ENCODE measurements at regions of chr14 and their contacts with region 1.

Region 1: DNA sequence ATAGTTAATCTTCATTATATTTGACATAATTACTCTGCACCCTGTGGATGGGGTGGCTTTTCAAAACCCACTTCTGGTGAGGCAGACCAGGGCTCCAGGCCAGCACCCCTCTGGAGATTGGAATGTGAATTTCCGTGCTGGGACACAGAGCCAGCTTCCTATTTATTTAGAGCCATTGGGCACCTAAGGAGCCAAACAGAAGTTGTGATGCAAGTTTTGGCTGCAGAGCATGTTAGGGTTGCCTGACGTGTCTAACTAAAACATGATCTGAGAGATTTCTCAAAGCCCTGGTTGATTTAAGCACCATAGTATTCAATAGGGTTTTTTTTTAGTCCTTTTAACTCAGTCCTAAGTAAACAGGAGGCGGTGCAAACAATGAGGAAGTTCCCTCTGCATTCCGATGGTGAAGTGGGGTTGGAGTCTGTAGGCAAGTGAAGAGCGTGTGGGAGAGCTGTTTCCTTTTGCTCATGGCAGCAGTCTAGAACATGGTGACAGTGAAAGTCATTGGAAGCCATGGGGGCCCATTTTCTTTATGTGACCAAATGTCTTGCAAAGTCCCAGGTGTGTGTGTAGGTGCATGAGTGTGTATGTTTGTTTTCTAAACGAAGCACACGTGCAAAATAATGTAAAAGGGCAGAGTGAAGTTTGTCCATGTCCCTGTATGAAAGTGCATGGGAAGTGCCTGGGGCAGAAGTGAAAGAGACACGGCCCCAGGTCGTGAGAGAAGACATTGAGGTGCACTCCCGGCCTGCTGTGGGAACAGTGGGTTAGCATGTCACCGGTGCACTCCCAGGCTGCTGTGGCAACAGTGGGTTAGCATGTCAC is 117.7 kb downstream of the PRKCH start:
- DNase-seq: peak; percentile 75
- H3K4me3 ChIP-seq: peak overlapping the region; percentile 10
- H3K4me3 Mint-ChIP-seq: peak overlapping the region; percentile 69
- H3K27ac Mint-ChIP-seq: peak overlapping the region; percentile 98
- H3K4me1 ChIP-seq: peaks cover 35% of the 10 kb centered on the region
- H3K4me1 Mint-ChIP-seq: peaks cover 22% of the 10 kb centered on the region
- H3K27me3 ChIP-seq: no peaks in the 10 kb centered on the region
- H3K27me3 Mint-ChIP-seq: no peaks in the 10 kb centered on the region
- CTCF ChIP-seq: no peak

Region 2: GRCh38 chr14:61321385-61322010 is 117.6 kb before region 1 on chr14 and contains the start of gene PRKCH:
- CTCF ChIA-PET with region 1: no interaction called
- POLR2A ChIA-PET with region 1: interaction called, 3 read pairs
- intact Hi-C with region 1: loop called (anchors 1 kb)
- DNase-seq: peak; percentile 92
- H3K4me3 ChIP-seq: peak within 1 kb of the TSS; percentile 49
- H3K4me3 Mint-ChIP-seq: peak within 1 kb of the TSS; percentile 83
- H3K27ac Mint-ChIP-seq: peak within 1 kb of the TSS; percentile 71
- H3K4me1 ChIP-seq: 0 out of 2 replicates have a peak, but pooled peaks cover 3% of the 10 kb centered on the region
- H3K4me1 Mint-ChIP-seq: no peaks in the 10 kb centered on the region
- H3K27me3 ChIP-seq: no peaks in the 10 kb centered on the region
- H3K27me3 Mint-ChIP-seq: no peaks in the 10 kb centered on the region
- CTCF ChIP-seq: peak in 1 of 2 experiments; percentile 19
- total RNA-seq, gene PRKCH: 17.8 and 18.3 TPM in 2 replicates

Region 3: DNA sequence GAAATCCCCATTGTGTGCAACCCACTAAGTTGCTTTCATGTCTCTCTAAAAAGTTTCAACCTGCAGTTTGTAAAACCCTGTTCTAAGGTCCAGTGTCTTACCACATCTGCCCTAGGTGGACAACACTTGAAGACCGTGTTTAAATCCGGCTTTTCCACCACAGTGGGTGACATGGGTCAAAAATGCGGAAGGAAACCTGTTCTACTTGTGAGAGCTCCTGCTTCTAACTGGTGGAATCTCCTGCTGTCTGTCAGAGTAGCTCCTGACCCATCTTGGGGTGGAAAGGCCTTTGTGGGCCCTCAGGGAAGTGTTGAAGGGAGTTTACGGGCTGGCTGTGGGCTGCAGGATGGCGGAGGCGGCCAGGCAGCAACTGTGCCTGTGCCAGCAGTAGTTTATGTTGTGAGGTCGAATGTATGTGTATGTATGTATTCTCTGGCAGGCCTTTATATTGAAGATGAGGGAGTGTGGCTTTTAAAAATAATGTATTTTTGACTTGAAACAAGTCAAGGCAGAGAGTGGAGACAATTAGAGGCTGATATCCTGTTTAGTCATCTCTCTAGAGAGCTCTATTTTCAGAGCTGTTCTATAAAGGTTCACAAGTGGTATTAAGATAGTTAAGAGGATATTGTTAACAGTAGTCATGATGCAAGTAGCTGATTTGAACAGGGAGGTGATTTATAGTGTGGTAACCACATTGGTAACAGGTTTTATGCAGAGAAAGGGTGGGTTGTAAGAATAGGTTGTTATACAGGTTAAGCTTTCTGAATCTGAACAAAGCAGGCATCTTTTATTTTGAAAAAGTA is 50.7 kb before region 1 on chr14:
- CTCF ChIA-PET with region 1: no interaction called
- POLR2A ChIA-PET with region 1: no interaction called
- intact Hi-C with region 1: loop called (anchors 5 kb)
- DNase-seq: peak; percentile 33 to 49
- H3K4me3 ChIP-seq: no peak overlapping the region
- H3K4me3 Mint-ChIP-seq: no peak overlapping the region
- H3K27ac Mint-ChIP-seq: no peak overlapping the region
- H3K4me1 ChIP-seq: peaks cover 18% of the 10 kb centered on the region
- H3K4me1 Mint-ChIP-seq: peaks cover 8% of the 10 kb centered on the region
- H3K27me3 ChIP-seq: no peaks in the 10 kb centered on the region
- H3K27me3 Mint-ChIP-seq: no peaks in the 10 kb centered on the region
- CTCF ChIP-seq: no peak

Region 4: DNA sequence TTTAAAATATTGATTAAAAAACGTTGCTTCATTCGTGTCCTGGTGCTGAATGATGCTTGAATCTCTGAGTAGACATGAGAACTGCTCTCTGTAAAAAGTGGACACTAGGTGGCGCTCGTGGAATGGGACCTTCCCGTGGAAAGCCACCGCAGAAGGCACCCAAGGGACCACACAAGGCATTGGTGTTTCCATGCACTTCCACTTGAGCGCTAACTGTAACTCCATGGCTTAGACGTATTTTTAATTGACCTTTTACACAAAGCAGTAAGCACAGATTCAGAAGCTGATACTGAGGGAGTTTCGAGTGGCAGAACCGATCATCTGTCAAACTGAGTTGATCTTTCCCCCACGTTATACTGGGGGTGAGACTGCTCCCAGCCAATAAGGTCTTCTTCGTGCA is 17.6 kb after region 1 on chr14:
- CTCF ChIA-PET with region 1: interaction called, 4 read pairs
- POLR2A ChIA-PET with region 1: no interaction called
- intact Hi-C with region 1: loop called (anchors 1 kb)
- DNase-seq: peak; percentile 74 to 78
- H3K4me3 ChIP-seq: no peak overlapping the region
- H3K4me3 Mint-ChIP-seq: no peak overlapping the region
- H3K27ac Mint-ChIP-seq: no peak overlapping the region
- H3K4me1 ChIP-seq: no peaks in the 10 kb centered on the region
- H3K4me1 Mint-ChIP-seq: no peaks in the 10 kb centered on the region
- H3K27me3 ChIP-seq: no peaks in the 10 kb centered on the region
- H3K27me3 Mint-ChIP-seq: no peaks in the 10 kb centered on the region
- CTCF ChIP-seq: peak; percentile 84 to 87

Region 5: DNA sequence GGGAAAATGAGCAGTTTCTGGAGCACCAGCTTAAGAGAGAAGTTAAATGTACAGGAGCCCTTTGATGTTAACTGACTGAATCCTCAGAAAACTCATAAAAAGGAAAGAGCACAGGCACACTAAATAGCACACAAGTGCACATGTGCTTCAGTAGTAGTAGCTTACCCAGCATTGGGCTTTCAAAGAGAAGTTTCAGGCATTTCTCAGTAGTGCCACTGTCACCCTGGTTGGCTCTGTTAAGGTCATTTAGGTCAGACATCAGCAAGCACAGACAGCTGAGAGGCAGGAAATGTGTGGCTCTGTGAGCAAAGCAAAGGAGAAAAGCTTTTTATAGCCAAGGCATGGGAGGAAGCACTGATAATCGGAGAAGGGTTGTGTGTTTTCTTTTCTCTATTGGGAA is 159.9 kb after region 1 on chr14:
- CTCF ChIA-PET with region 1: no interaction called
- POLR2A ChIA-PET with region 1: no interaction called
- intact Hi-C with region 1: no loop called
- DNase-seq: no peak
- H3K4me3 ChIP-seq: no peak overlapping the region
- H3K4me3 Mint-ChIP-seq: no peak overlapping the region
- H3K27ac Mint-ChIP-seq: no peak overlapping the region
- H3K4me1 ChIP-seq: peaks cover 40% of the 10 kb centered on the region
- H3K4me1 Mint-ChIP-seq: peaks cover 31% of the 10 kb centered on the region
- H3K27me3 ChIP-seq: no peaks in the 10 kb centered on the region
- H3K27me3 Mint-ChIP-seq: no peaks in the 10 kb centered on the region
- CTCF ChIP-seq: no peak

Region 6: GRCh38 chr14:61694830-61695694 is 256.0 kb after region 1 on chr14 and contains the start of gene HIF1A:
- CTCF ChIA-PET with region 1: no interaction called
- POLR2A ChIA-PET with region 1: no interaction called
- intact Hi-C with region 1: no loop called
- DNase-seq: peak; percentile 97 to 98
- H3K4me3 ChIP-seq: peak within 1 kb of the TSS; percentile 79
- H3K4me3 Mint-ChIP-seq: peak within 1 kb of the TSS; percentile 91
- H3K27ac Mint-ChIP-seq: peak within 1 kb of the TSS; percentile 94
- H3K4me1 ChIP-seq: peaks cover 17% of the 10 kb centered on the region
- H3K4me1 Mint-ChIP-seq: peaks cover 20% of the 10 kb centered on the region
- H3K27me3 ChIP-seq: no peaks in the 10 kb centered on the region
- H3K27me3 Mint-ChIP-seq: no peaks in the 10 kb centered on the region
- CTCF ChIP-seq: peak in 1 of 2 experiments; percentile 21
- total RNA-seq, gene HIF1A: 125 and 127 TPM in 2 replicates

Measured in Caco-2 (cell line).